CD8-positive, alpha-beta memory T cell (primary cell): ENCODE measurements at regions of chr17 and their contacts with region 1.

Region 1: GRCh38 chr17:28726226-28727130 is at the start of gene TLCD1:
- DNase-seq: peak; percentile 83 to 92 (median 85)
- H3K4me3 ChIP-seq: peak within 1 kb of the TSS; percentile 91
- H3K4me3 Mint-ChIP-seq: peak within 1 kb of the TSS; percentile 94 to 99 (median 97)
- H3K27ac ChIP-seq: peak within 1 kb of the TSS; percentile 97
- H3K27ac Mint-ChIP-seq: peak within 1 kb of the TSS; percentile 97 to 100 (median 99)
- H3K4me1 ChIP-seq: peaks cover 33% of the 10 kb centered on the region
- H3K4me1 Mint-ChIP-seq: peaks cover 51 to 72% (median 54%) of the 10 kb centered on the region in 3 donors
- H3K27me3 ChIP-seq: no peaks in the 10 kb centered on the region
- H3K27me3 Mint-ChIP-seq: peaks cover 0 to 5% of the 10 kb centered on the region in 2 donors
- total RNA-seq, gene TLCD1: 36.5 to 38.9 TPM

Region 2: DNA sequence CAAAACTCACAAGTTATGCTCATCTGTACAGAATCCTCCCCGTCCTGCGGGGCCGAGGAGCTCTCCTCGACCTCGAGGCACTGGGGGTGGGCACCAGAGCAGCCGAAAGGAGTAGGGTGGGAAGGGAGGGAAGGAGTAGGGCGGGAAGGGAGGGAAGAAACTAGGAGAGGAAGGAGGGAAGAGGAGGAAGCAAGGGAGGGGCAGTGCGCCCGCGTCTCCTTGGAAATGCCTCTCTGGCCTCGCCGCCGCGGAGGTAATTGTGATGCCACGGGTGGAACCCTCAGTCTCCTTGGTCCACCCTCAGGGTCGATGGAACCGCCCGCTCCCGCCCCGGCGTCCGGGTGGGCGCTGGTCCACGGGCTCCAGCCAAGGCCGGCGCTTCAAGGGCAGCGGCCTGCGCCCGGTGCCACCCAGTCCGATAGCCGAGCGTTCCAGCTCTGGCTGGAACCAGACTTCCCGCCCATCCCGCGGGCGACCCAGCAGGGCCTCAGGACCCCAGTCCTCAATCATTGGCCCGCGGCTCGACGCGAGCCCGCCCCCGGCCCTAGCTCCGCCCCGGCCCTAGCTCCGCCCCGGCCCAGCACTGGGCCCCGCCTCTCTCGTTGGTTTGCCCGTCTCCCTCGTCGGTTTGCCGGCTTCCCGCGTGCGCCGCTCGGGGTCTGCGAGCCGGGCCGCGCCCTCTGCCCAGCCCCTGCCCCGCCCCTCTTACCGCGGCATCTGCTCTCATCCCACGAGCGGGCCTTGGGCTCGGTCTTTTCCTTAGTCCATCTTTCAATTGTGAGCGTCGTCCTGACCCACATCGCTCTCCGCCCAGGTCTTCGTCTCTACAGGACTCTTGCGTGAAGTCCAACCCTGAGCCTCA is 15.4 kb before region 1 on chr17:
- CTCF ChIA-PET with region 1: interaction called, 35 read pairs
- POLR2A ChIA-PET with region 1: interaction called, 53 read pairs
- DNase-seq: peak; percentile 84 to 91 (median 85)
- H3K4me3 ChIP-seq: peak overlapping the region; percentile 82
- H3K4me3 Mint-ChIP-seq: peak overlapping the region; percentile 86 to 97 (median 91)
- H3K27ac ChIP-seq: peak overlapping the region; percentile 83
- H3K27ac Mint-ChIP-seq: peak overlapping the region; percentile 41 to 97 (median 92)
- H3K4me1 ChIP-seq: peaks cover 17% of the 10 kb centered on the region
- H3K4me1 Mint-ChIP-seq: peaks cover 16 to 24% (median 20%) of the 10 kb centered on the region in 3 donors
- H3K27me3 ChIP-seq: peaks cover under 1% of the 10 kb centered on the region
- H3K27me3 Mint-ChIP-seq: peaks cover 14 to 17% of the 10 kb centered on the region in 2 donors

Region 3: GRCh38 chr17:28763804-28764266 is 37.4 kb after region 1 on chr17:
- CTCF ChIA-PET with region 1: interaction called, 78 read pairs
- POLR2A ChIA-PET with region 1: interaction called, 3 read pairs
- DNase-seq: peak; percentile 63 to 84 (median 70)
- H3K4me3 ChIP-seq: no peak overlapping the region
- H3K4me3 Mint-ChIP-seq: no peak overlapping the region
- H3K27ac ChIP-seq: no peak overlapping the region
- H3K27ac Mint-ChIP-seq: peak overlapping the region; percentile 31 to 90 (median 76)
- H3K4me1 ChIP-seq: no peaks in the 10 kb centered on the region
- H3K4me1 Mint-ChIP-seq: peaks cover 2 to 6% (median 4%) of the 10 kb centered on the region in 3 donors
- H3K27me3 ChIP-seq: no peaks in the 10 kb centered on the region
- H3K27me3 Mint-ChIP-seq: no peaks in the 10 kb centered on the region

Region 4: DNA sequence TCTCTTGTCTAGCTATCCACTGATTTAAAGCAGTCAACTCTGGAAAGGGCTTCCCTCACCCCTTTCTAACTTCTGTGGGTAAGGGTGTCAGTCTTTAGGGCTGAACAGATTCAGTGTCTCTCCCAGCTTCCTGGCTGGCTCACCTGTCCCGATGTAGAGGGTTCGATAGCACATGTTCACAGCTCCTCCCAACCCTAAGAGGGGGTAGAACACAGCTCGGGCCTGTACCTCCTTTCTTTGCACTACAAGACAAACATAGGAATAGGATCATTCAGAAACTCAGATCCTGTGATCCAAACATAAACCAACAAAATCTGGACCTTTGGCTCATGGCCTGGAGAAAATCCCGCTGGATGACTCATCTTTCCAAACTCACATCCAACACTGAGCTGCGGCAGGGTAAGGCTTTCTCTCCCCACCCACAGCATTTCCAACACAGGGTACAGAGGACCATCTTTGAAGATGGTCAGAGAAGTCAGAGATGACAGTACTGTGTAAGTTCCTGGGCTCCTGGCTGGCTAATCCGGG is 182.2 kb after region 1 on chr17:
- CTCF ChIA-PET with region 1: interaction called, 20 read pairs
- POLR2A ChIA-PET with region 1: interaction called, 4 read pairs
- DNase-seq: no peak
- H3K4me3 ChIP-seq: no peak overlapping the region
- H3K4me3 Mint-ChIP-seq: no peak overlapping the region
- H3K27ac ChIP-seq: no peak overlapping the region
- H3K27ac Mint-ChIP-seq: peak overlapping the region in 4 of 8 donors; percentile 5 to 75 (median 34)
- H3K4me1 ChIP-seq: no peaks in the 10 kb centered on the region
- H3K4me1 Mint-ChIP-seq: peaks cover 1 to 5% (median 5%) of the 10 kb centered on the region in 3 donors
- H3K27me3 ChIP-seq: no peaks in the 10 kb centered on the region
- H3K27me3 Mint-ChIP-seq: no peaks in the 10 kb centered on the region

Region 5: GRCh38 chr17:28951991-28952975 is 225.8 kb after region 1 on chr17:
- CTCF ChIA-PET with region 1: interaction called, 72 read pairs
- POLR2A ChIA-PET with region 1: interaction called, 65 read pairs
- DNase-seq: peak; percentile 91 to 98 (median 97)
- H3K4me3 ChIP-seq: peak overlapping the region; percentile 98
- H3K4me3 Mint-ChIP-seq: no peak overlapping the region
- H3K27ac ChIP-seq: peak overlapping the region; percentile 85
- H3K27ac Mint-ChIP-seq: no peak overlapping the region
- H3K4me1 ChIP-seq: peaks cover 27% of the 10 kb centered on the region
- H3K4me1 Mint-ChIP-seq: peaks cover 15 to 17% (median 15%) of the 10 kb centered on the region in 3 donors
- H3K27me3 ChIP-seq: no peaks in the 10 kb centered on the region
- H3K27me3 Mint-ChIP-seq: peaks cover 0 to 4% of the 10 kb centered on the region in 2 donors